ENCODE measurements at regions of chr10 and their contacts with region 1.

Region 1: DNA sequence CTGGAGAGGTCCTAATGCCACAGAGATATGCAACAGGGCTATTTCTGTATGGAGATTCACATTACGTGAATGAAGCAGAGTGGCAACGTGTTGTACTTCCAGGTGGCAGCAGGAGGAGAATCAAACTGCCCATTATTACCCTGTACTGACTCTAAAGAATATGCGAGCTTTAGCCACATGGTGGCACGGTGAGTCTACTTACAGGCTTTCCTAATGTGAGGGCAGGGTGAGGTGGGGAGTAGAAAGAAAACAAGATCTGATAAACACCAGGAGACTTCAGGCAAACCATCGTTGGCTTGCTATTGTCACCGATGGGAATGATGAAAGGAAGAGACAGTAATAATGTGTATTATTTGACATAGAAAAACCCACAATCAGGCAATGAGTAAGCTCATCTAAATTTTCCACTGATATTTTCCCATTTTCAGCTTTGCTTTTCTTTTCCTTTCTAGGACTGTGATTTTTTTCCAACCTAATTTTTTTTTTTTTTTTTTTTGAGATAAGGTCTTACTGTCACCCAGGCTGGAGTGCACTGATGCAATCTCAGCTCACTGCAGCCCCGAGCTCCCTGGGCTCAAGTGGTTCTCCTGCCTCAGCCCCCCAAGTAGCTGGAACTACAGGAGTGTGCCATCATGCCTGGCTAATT is 164.3 kb downstream of the BTAF1 start:
- DNase-seq: peak; percentile 22 to 68
- ATAC-seq: peak; percentile 74 to 94 (median 89)
- H3K4me3 ChIP-seq: no peak overlapping the region
- H3K4me3 Mint-ChIP-seq: no peak overlapping the region
- H3K27ac ChIP-seq: no peak overlapping the region
- H3K27ac Mint-ChIP-seq: no peak overlapping the region
- H3K4me1 ChIP-seq: no peaks in the 10 kb centered on the region
- H3K4me1 Mint-ChIP-seq: peaks cover 5% of the 10 kb centered on the region in 2 donors
- H3K27me3 ChIP-seq: no peaks in the 10 kb centered on the region
- H3K27me3 Mint-ChIP-seq: no peaks in the 10 kb centered on the region
- CTCF ChIP-seq: peak; percentile 61

Region 2: GRCh38 chr10:91969297-91969696 is 118.6 kb before region 1 on chr10:
- intact Hi-C with region 1: no loop called
- DNase-seq: no peak
- ATAC-seq: no peak
- H3K4me3 ChIP-seq: no peak overlapping the region
- H3K4me3 Mint-ChIP-seq: no peak overlapping the region
- H3K27ac ChIP-seq: no peak overlapping the region
- H3K27ac Mint-ChIP-seq: no peak overlapping the region
- H3K4me1 ChIP-seq: no peaks in the 10 kb centered on the region
- H3K4me1 Mint-ChIP-seq: no peaks in the 10 kb centered on the region
- H3K27me3 ChIP-seq: no peaks in the 10 kb centered on the region
- H3K27me3 Mint-ChIP-seq: no peaks in the 10 kb centered on the region
- CTCF ChIP-seq: no peak

Region 3: DNA sequence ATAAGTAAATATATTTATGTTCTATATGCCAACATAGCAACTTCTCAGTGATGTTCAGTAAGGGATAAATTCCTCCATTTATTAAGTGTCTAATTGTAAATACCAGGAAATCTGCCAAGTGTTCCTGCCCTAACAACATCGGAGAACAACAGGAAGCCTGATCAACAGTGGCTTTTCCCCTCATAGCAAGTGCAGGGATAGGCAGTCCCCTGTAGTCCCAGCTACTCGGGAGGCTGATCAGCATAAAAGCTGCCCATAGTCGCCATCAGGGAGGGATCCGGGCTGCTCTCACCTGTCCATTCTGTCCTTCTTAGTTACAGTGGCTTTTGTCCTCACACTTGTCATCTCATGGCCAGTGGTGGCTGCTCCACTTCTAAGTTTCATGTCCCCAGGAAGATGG is 344.7 kb after region 1 on chr10:
- intact Hi-C with region 1: loop called (anchors 1 kb)
- DNase-seq: no peak
- ATAC-seq: no peak
- H3K4me3 ChIP-seq: no peak overlapping the region
- H3K4me3 Mint-ChIP-seq: no peak overlapping the region
- H3K27ac ChIP-seq: no peak overlapping the region
- H3K27ac Mint-ChIP-seq: no peak overlapping the region
- H3K4me1 ChIP-seq: no peaks in the 10 kb centered on the region
- H3K4me1 Mint-ChIP-seq: no peaks in the 10 kb centered on the region
- H3K27me3 ChIP-seq: no peaks in the 10 kb centered on the region
- H3K27me3 Mint-ChIP-seq: no peaks in the 10 kb centered on the region
- CTCF ChIP-seq: no peak

Measured in natural killer cell (primary cell).